Heart left ventricle (tissue), 16 donors: ENCODE measurements at regions of chr12 and their contacts with region 1.

Region 1: GRCh38 chr12:90515199-90516175 is 439.5 kb downstream of the CCER1 start:
- DNase-seq: no peak
- ATAC-seq: no peak
- H3K4me3 ChIP-seq: no peak overlapping the region
- H3K27ac ChIP-seq: no peak overlapping the region
- H3K4me1 ChIP-seq: peaks cover 0 to 25% (median 8%) of the 10 kb centered on the region in 12 donors
- H3K27me3 ChIP-seq: no peaks in the 10 kb centered on the region
- CTCF ChIP-seq: no peak
- POLR2A ChIP-seq: no peak

Region 2: DNA sequence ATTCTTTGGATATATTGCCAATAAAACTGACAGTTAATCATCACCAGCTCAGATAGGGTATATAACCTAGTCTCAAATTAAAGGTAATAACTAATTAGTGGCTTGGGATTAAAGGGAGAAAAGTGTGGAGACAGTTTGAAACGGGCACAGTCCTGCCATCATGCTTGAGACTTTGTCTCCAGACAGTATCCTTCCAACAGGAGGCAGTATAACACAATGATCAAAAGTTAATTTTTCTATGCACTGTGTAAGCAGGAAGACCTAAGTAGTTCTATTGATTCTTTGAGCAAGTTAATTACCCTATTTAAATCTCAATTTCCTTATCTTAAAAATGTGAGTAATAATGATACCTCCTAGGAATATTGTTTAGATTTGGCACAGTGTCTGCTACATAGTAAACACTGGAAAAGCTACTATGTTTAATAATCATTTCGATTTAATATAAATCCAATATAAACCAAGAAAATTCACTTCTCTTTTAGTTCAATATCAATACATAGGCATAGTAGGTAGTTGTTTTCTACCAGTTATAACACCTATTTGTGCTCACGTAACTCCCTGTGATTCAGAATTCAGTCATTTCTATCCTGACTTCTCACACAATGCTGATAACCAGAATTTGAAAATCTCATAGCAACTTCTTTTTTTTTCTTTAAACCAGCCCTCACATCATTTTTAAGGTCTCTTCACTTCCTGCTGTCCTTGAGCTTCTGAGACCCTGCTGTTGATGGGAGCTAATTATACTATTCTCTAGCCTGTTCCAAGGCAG is 1044.6 kb before region 1 on chr12:
- intact Hi-C with region 1: loop called in 1 of 10 experiments (anchors 10 kb)
- DNase-seq: no peak
- ATAC-seq: peak; percentile 71 to 77 (median 74)
- H3K4me3 ChIP-seq: no peak overlapping the region
- H3K27ac ChIP-seq: no peak overlapping the region
- H3K4me1 ChIP-seq: peaks cover 0 to 19% (median 0%) of the 10 kb centered on the region in 12 donors
- H3K27me3 ChIP-seq: no peaks in the 10 kb centered on the region
- CTCF ChIP-seq: peak; percentile 47 to 74 (median 62)
- POLR2A ChIP-seq: no peak

Region 3: GRCh38 chr12:90102957-90103652 is 412.4 kb before region 1 on chr12:
- intact Hi-C with region 1: loop called in 1 of 10 experiments (anchors 10 kb)
- DNase-seq: no peak
- ATAC-seq: peak in 2 of 4 donors; percentile 46 to 53
- H3K4me3 ChIP-seq: no peak overlapping the region
- H3K27ac ChIP-seq: no peak overlapping the region
- H3K4me1 ChIP-seq: peaks cover 0 to 4% (median 0%) of the 10 kb centered on the region in 12 donors
- H3K27me3 ChIP-seq: no peaks in the 10 kb centered on the region
- CTCF ChIP-seq: peak in 11 of 12 donors; percentile 12 to 61 (median 39)
- POLR2A ChIP-seq: no peak

Region 4: GRCh38 chr12:90299121-90299520 is 216.4 kb before region 1 on chr12:
- intact Hi-C with region 1: loop called in 1 of 10 experiments (anchors 10 kb)
- DNase-seq: no peak
- ATAC-seq: peak in 1 of 4 donors; percentile 12
- H3K4me3 ChIP-seq: peak overlapping the region in 3 of 12 donors; percentile 5 to 12 (median 6)
- H3K27ac ChIP-seq: peak overlapping the region in 5 of 12 donors; percentile 6 to 52 (median 29)
- H3K4me1 ChIP-seq: peaks cover 0 to 19% (median 0%) of the 10 kb centered on the region in 12 donors
- H3K27me3 ChIP-seq: no peaks in the 10 kb centered on the region
- CTCF ChIP-seq: no peak
- POLR2A ChIP-seq: no peak

Region 5: DNA sequence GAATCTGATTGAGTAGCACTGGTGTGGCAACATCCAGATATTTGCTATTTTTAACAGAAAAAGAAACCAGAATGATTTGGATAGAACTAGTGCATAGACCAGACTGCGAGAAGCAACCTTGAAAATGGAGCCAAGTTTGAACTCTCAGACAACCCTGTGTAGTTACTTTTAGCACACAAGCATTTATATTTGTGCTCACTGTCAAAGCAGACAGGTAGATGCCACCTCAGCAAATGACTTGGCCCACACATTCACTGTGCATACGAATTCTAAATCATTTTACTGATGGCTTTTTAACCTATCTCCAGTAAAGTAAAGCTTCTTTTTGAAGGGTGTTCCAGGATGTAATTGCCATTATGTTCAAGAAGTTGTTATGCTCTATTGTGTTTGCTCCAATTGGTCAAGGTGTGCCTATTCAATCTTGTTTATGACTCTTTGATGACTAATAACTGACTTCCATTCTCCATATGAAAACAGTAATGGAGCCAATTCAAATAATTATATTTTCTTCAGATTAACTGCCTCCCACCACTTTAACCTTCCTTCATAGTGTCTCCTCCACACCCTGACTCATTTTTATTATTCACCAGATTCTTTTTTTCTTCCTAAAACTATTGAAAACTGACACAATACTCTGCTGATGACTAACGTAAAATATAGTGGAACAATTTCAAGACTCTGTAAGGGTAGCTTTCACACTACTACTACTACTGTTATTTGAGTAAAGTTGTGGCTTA is 301.0 kb after region 1 on chr12:
- intact Hi-C with region 1: no loop called
- DNase-seq: no peak
- ATAC-seq: no peak
- H3K4me3 ChIP-seq: no peak overlapping the region
- H3K27ac ChIP-seq: no peak overlapping the region
- H3K4me1 ChIP-seq: no peaks in the 10 kb centered on the region
- H3K27me3 ChIP-seq: no peaks in the 10 kb centered on the region
- CTCF ChIP-seq: no peak
- POLR2A ChIP-seq: no peak